ENCODE measurements at regions of chr10 and their contacts with region 1.

Region 1: DNA sequence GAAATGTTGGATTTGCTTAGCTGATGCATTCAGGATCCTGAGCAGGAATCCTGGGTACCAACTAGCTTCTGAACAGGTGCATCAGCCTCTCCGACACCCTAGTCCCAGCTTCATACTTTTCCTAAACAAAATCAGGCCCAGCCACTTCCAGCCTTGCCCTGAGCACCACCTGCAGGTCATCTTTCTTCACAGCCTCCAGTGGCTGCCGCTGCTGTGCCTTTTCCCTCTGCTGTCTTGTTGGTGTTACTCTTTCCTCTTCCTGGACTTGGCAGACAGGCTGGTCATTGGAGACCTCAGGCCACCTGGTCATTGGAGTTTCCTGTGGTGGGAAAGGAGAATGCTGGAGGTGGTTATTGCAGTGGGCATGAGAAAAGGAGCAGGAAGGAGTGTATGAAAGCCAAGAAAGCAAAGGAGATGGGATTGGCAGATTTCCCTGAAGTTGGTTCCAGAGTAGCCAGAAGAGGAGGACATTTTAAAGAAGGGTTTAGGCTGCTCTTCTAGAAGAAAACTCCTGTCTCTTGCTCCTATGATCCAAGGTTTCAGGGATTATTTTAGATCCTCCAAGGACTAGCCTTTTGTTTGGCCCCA is 48.2 kb upstream of the NFKB2 start:
- DNase-seq: peak; percentile 25
- CTCF ChIP-seq: peak; percentile 60

Region 2: GRCh38 chr10:102200751-102201640 is 146.3 kb before region 1 on chr10:
- in situ Hi-C with region 1: no loop called
- DNase-seq: no peak
- CTCF ChIP-seq: no peak

Region 3: GRCh38 chr10:102225646-102226541 is 121.4 kb before region 1 on chr10 and contains the start of gene ELOVL3:
- in situ Hi-C with region 1: loop called (anchors 5 kb)
- DNase-seq: peak; percentile 97
- CTCF ChIP-seq: no peak

Region 4: GRCh38 chr10:102280397-102281101 is 66.8 kb before region 1 on chr10:
- in situ Hi-C with region 1: no loop called
- DNase-seq: no peak
- CTCF ChIP-seq: no peak

Region 5: DNA sequence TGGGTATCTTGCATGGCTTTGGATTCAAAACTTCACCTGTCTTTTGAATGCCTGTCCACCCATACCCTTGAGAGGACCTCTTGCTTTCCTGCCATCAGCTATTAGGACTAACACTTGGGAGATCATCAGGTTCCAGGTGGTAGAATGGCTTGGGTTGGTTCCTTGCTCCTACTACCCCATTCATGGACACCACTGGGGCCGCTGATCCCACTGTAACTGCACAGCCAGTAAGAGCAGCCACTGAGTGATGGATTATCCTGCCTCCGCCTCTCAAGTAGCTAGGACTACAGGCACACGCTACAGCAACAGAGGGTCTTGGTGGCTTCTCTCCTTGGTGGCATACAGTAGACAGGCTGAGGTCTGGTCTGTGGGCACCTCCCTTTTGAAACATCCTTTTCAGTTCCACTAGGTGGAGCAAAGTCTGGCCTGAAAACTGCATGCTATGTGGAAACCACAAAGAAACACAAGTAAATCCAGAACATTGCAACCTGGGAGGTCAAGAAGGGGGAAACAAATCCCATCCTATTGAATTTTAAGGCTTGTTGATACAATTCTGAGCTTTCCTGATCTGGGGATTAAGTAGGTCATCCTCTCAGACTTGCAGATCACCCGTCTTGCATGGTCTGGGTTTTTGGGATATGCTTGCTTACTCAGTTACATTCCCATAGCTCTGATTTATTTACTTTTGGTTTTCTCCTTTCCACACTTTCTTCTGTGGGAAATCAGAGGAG is 405.8 kb after region 1 on chr10:
- in situ Hi-C with region 1: no loop called
- DNase-seq: peak; percentile 45
- CTCF ChIP-seq: peak; percentile 48